Mammary epithelial cell (primary cell): ENCODE measurements at regions of chr11 and their contacts with region 1.

Region 1: DNA sequence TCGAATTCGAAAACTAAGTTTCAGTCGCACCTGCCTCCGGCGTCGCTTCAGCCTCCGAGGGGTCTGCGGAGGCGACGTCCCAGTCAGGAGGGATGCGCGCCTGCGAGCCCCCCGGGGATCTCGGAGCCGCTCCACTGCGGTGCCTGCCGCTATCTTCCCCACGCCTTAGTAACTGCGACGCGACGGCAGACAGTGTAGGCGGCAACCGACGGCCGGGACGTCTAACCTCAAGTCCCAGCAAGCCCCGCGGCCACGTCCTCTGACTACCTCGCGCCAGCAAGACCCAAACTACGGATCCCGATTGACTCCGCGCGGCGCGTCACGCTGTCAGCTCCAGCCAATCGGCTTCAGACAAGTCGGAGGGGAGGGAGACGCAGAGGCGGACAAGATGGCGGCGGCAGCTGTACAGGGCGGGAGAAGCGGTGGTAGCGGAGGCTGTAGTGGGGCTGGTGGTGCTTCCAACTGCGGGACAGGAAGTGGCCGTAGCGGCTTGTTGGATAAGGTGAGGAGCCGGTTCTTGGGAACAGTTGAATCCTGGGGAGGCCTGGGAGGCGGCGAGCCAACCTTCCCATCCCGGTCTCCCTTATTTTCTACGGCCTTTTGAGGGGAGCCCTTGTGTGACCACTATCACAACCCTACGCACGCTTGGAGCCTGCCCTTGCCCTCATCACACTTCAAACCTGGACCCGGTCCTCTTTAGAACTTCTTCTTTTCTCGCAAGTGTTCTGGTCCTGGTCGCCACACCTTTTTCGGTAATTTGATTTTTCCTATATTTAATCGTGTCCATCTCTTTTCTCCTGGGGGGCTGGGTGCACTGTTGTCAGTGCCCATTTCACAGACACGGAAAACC is at the starts of genes SPCS2 and XRRA1:
- DNase-seq: peak; percentile 98
- H3K4me3 ChIP-seq: peak within 1 kb of the TSS; percentile 72 to 100 (median 99)
- H3K27ac ChIP-seq: peak within 1 kb of the TSS; percentile 91
- H3K4me1 ChIP-seq: peaks cover 11% of the 10 kb centered on the region
- H3K27me3 ChIP-seq: no peaks in the 10 kb centered on the region
- CTCF ChIP-seq: no peak
- total RNA-seq, gene SPCS2: 14.0 to 122 TPM
- total RNA-seq, gene XRRA1: 17.6 to 28.7 TPM

Region 2: DNA sequence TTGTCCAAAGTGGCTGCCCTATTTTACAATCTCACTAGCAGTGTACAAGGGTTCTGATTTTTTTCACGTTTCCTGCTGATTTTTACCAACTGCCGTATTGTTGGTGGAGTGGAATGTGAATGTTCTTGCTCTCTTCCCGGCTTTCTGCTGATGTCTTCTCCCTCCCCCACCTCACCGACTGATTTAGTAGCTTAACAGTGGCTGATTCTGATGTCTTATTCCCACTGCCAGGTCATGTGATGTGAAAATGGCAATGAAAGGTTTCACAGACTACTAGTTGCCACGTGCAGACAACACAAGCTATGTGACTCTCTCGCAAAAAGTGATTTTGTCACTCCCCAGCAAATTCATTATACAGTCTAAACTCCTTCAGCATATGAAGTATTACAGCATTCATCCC is 22.3 kb after region 1 on chr11:
- CTCF ChIA-PET with region 1: no interaction called
- dilution Hi-C with region 1: no loop called
- in situ Hi-C with region 1: no loop called
- intact Hi-C with region 1: loop called (anchors 2 kb)
- DNase-seq: no peak
- H3K4me3 ChIP-seq: no peak overlapping the region
- H3K27ac ChIP-seq: no peak overlapping the region
- H3K4me1 ChIP-seq: peaks cover 21% of the 10 kb centered on the region
- H3K27me3 ChIP-seq: no peaks in the 10 kb centered on the region
- CTCF ChIP-seq: no peak

Region 3: DNA sequence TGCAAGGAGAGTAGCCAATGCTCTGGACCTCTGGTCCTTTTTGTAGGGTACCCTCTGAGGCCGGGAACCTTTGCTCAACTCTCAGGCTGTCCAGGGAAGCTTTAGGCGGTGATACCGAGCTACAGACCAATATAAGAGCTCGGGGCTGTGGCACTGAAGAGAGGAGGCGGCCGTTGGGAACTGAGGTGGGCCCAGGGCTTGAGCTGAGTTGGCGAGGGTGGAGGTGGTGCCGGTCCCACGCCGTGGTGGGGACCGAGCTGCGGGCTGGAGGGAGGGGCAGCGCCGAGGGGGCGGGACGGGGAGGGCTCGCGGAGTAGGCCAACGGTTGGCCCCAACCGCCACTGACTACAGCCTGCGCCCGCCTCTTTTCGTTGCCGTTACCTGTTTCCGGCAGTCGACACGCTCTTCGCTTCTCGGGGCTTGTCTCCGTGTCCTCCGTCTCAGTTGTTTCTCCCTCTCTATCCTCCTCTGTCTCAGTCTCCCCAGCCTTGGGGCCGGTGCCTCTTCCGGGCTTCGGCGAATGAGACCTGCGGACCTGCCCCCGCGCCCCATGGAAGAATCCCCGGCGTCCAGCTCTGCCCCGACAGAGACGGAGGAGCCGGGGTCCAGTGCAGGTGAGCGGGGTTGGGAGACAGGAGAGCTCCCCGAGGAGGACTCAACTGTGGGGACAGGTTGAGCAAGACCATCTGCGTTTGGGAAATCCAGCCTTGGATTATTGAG is 39.6 kb after region 1 on chr11 and contains the start of gene NEU3:
- CTCF ChIA-PET with region 1: interaction called, 7 read pairs
- dilution Hi-C with region 1: loop called (anchors 5 kb)
- in situ Hi-C with region 1: no loop called
- intact Hi-C with region 1: loop called (anchors 1 kb)
- DNase-seq: peak; percentile 85
- H3K4me3 ChIP-seq: peak within 1 kb of the TSS; percentile 70 to 96 (median 70)
- H3K27ac ChIP-seq: peak within 1 kb of the TSS; percentile 52
- H3K4me1 ChIP-seq: peaks cover 5% of the 10 kb centered on the region
- H3K27me3 ChIP-seq: no peaks in the 10 kb centered on the region
- CTCF ChIP-seq: no peak
- total RNA-seq, gene NEU3: 17.3 to 21.8 TPM